A549 (cell line): ENCODE measurements at regions of chr12 and their contacts with region 1.

Region 1: GRCh38 chr12:89051065-89051677 is 301.1 kb downstream of the DUSP6 start:
- DNase-seq: peak; percentile 51 to 74
- ATAC-seq: peak; percentile 80 to 92; a peak in 5 of 6 replicates
- H3K4me3 ChIP-seq: no peak overlapping the region
- H3K27ac ChIP-seq: no peak overlapping the region
- H3K4me1 ChIP-seq: no peaks in the 10 kb centered on the region
- CTCF ChIP-seq: peak; percentile 94
- EP300 ChIP-seq: no peak
- POLR2A ChIP-seq: no peak
- RAD21 ChIP-seq: peak; percentile 95 to 98

Region 2: DNA sequence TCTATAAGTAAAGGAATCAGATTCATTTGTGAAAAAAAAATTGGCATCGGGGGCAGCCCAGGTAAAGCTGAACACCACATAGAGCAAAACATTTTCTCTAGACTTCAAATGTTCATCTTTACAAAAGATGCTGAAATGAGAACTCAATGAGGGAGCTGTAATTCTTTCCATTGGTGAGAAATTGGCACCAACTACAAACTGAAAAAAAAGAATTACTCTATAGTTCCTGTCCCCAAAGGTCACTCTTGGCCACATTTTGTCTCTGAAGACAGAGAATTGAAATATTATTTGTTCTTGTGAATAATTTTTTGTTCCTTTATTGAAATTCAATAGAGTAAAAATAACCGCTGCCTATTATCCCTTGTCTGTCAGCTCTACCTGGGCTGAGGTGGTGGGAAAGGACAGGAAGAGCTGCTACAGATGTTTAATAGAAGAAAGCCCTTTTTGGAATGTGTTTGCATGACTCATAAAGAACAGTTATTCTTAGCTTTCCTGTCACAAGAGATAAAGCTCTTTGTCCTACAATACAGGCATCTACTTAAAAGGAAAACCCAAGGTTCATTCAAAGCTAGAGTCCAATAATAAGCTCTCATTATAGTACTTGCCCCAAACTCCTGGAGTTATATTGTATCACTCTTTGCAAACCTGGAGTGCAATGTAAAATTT is 90.8 kb before region 1 on chr12:
- CTCF ChIA-PET with region 1: no interaction called
- POLR2A ChIA-PET with region 1: no interaction called
- DNase-seq: no peak
- ATAC-seq: no peak
- H3K4me3 ChIP-seq: no peak overlapping the region
- H3K27ac ChIP-seq: no peak overlapping the region
- H3K4me1 ChIP-seq: no peaks in the 10 kb centered on the region
- CTCF ChIP-seq: no peak
- EP300 ChIP-seq: no peak
- POLR2A ChIP-seq: no peak
- RAD21 ChIP-seq: no peak

Region 3: GRCh38 chr12:89040146-89040964 is 10.8 kb before region 1 on chr12:
- CTCF ChIA-PET with region 1: interaction called, 10 read pairs
- POLR2A ChIA-PET with region 1: no interaction called
- DNase-seq: no peak
- ATAC-seq: no peak
- H3K4me3 ChIP-seq: no peak overlapping the region
- H3K27ac ChIP-seq: no peak overlapping the region
- H3K4me1 ChIP-seq: no peaks in the 10 kb centered on the region
- CTCF ChIP-seq: no peak
- EP300 ChIP-seq: no peak
- POLR2A ChIP-seq: no peak
- RAD21 ChIP-seq: no peak

Region 4: DNA sequence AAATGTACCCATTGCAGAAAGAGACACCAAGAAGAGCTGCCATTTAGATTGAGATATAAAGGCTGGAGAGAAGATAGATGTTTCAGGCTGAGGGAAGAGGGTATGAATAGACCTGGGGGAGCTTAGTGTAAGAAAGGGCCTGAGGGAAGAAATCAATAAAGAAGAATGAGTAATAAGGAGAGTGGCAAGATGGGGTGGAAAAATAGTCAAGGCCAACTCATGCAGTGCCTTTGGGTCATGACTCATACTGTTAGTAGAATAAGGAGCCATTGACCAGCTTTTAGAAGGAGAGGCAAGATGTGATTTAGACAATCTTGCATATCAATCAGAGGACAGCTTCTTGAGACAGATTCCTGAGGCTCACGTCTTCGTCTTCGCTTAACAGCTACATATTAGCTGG is 13.6 kb after region 1 on chr12:
- CTCF ChIA-PET with region 1: interaction called, 15 read pairs
- POLR2A ChIA-PET with region 1: no interaction called
- DNase-seq: peak in 1 of 2 experiments; percentile 6
- ATAC-seq: no peak
- H3K4me3 ChIP-seq: no peak overlapping the region
- H3K27ac ChIP-seq: no peak overlapping the region
- H3K4me1 ChIP-seq: no peaks in the 10 kb centered on the region
- CTCF ChIP-seq: no peak
- EP300 ChIP-seq: no peak
- POLR2A ChIP-seq: no peak
- RAD21 ChIP-seq: no peak